ENCODE measurements at regions of chr15 and their contacts with region 1.

Region 1: DNA sequence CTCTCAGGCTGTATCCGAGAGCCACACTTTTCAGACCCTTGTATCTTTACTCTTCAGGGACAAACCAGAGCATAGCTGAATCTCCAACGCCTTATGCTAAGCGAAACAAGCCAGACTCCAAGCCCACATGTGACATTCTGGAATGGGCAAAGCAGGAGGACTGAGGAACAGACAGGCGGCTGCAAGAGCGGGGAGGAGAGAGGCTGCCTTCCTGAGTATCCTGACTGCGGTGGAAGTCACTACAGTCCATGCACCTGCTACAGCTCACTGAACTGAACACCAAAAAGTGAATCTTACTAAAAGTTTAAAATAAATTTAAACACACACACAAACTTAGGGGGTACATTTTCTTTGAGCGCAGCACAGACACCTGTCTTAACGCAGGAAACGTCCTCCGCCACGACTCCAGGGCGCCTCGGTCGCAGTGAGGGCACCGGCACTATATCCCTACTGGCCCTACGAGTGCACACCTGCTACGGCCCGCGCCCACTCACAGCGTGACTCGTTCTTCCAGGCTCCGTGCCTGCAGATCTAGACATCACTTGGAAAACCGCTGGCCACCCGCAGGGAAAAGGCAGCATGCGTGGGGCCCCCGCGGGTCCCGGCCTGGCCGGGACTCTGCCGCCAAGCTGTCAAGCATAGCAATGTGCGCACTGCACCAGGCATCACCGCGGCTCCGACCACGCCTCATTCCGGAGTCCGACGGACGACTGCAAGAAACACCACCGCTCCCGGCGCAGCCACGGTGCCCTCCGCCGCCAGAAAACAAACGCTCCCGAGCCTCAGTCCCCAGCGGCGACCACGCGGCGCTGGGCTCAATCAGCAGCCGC is 1.3 kb downstream of the CYFIP1 start:
- DNase-seq: peak; percentile 22
- H3K4me3 Mint-ChIP-seq: peak overlapping the region; percentile 95
- H3K27ac Mint-ChIP-seq: peak overlapping the region; percentile 24
- H3K4me1 Mint-ChIP-seq: peaks cover 21% of the 10 kb centered on the region
- H3K27me3 Mint-ChIP-seq: peaks cover 15% of the 10 kb centered on the region

Region 2: DNA sequence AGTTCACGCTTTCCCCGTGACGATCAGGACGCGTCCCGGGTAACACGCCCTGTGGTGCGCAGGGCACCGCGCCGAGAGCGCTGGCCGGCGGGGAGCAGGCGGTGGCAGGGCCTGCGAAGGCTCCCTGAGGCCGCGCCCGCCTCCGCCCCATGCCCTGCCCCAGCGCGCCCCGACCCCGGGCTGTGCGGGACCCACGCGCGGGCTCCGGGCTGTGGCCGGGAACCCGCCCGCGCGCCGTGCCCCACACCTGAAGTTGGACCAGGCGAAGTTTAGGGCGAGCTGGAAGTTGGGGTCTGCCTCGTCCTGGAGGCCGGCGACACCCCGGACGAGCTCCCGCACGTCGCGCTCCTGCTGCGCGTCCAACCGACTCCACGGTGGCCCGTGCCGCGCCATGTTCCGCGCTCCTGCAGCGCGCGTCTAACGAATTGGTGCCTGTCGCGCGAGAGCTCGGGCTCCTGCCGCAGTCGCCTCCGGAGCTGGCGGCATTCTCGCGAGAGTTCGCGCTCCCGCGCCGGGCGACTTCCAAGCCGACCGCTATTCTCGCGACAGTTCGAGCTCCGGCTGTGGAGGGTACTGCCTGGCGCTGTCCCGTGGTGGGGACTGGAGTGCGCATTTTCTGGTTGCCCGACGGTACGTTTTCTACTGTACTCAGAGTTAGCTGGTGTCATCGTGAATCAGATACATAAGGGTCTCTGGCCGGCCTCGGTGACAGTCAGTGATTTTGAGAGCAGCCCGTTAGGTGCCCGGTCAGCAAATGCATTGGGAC is 60.4 kb after region 1 on chr15 and contains the start of gene TUBGCP5:
- intact Hi-C with region 1: loop called (anchors 5 kb)
- DNase-seq: peak; percentile 98
- H3K4me3 Mint-ChIP-seq: peak within 1 kb of the TSS; percentile 93
- H3K27ac Mint-ChIP-seq: peak within 1 kb of the TSS; percentile 98
- H3K4me1 Mint-ChIP-seq: peaks cover 17% of the 10 kb centered on the region
- H3K27me3 Mint-ChIP-seq: no peaks in the 10 kb centered on the region
- total RNA-seq, gene TUBGCP5: 22.3 and 25.9 TPM in 2 replicates